A549 (cell line): ENCODE measurements at regions of chr15 and their contacts with region 1.

Region 1: DNA sequence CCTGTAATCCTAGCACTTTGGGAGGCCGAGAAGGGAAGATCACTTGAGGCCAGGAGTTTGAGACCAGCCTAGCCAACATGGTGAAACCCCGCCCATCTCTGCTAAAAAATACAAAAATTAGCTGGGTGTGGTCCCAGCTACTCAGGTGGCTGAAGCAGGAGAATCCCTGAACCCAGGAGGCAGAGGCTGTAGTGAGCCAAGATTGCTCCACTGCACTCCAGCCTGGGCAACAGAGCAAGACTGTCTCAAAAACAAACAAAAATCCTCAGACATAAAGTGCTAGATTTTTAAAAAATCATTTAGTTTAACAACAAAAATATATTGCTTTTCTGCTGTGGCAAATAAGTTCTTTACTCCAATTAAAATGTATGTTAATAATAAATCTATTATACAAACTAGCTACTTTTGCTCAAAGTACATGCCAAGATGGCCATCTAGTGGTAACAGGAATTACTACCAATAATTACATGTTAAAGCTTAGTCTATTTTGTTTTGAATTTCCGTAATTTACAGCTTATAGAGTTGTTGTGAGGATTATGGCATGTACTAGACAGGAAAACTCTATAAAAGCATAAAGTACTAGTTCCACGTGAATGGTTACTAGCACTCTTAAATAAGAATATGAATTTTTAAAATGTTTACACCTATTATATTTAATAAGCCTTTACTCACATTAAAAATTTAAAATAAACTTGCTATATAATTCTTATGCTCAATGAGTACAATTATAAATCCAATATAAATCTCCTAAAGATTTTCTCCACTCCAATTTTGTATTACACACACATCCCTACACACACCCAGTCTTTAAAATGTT is 39.0 kb downstream of the GABPB1 start:
- DNase-seq: peak; percentile 25 to 65
- ATAC-seq: peak; percentile 30 to 77; a peak in 3 of 6 replicates
- H3K4me3 ChIP-seq: no peak overlapping the region
- H3K27ac ChIP-seq: peak overlapping the region; percentile 11 to 56; a peak in 4 of 6 replicates
- H3K4me1 ChIP-seq: peaks cover 25% of the 10 kb centered on the region
- CTCF ChIP-seq: peak; percentile 94
- EP300 ChIP-seq: no peak
- POLR2A ChIP-seq: no peak
- RAD21 ChIP-seq: peak; percentile 92 to 96

Region 2: GRCh38 chr15:50166216-50166615 is 149.8 kb before region 1 on chr15:
- CTCF ChIA-PET with region 1: interaction called, 18 read pairs
- POLR2A ChIA-PET with region 1: interaction called, 3 read pairs
- DNase-seq: peak; percentile 38 to 71
- ATAC-seq: peak; percentile 77 to 89
- H3K4me3 ChIP-seq: no peak overlapping the region; the same call in 2 of the 3 replicates
- H3K27ac ChIP-seq: peak overlapping the region; percentile 88 to 92
- H3K4me1 ChIP-seq: peaks cover 63% of the 10 kb centered on the region
- CTCF ChIP-seq: no peak
- EP300 ChIP-seq: peak; percentile 22 to 28; a peak in 2 of 5 replicates
- POLR2A ChIP-seq: no peak
- RAD21 ChIP-seq: no peak; a peak in 1 of 5 replicates

Region 3: GRCh38 chr15:50182219-50183013 is 133.6 kb before region 1 on chr15:
- CTCF ChIA-PET with region 1: interaction called, 34 read pairs
- POLR2A ChIA-PET with region 1: no interaction called
- DNase-seq: peak; percentile 55 to 61
- ATAC-seq: peak; percentile 84 to 88
- H3K4me3 ChIP-seq: peak overlapping the region; percentile 73
- H3K27ac ChIP-seq: peak overlapping the region; percentile 76 to 88
- H3K4me1 ChIP-seq: peaks cover 27% of the 10 kb centered on the region; the same call in 2 of the 3 replicates
- CTCF ChIP-seq: peak; percentile 8; the same call in 1 of the 3 replicates
- EP300 ChIP-seq: no peak
- POLR2A ChIP-seq: peak; percentile 11; the same call in 1 of the 2 replicates
- RAD21 ChIP-seq: peak in 1 of 2 experiments; percentile 2; a peak in 3 of 5 replicates

Region 4: GRCh38 chr15:50302581-50302980 is 13.4 kb before region 1 on chr15:
- CTCF ChIA-PET with region 1: interaction called, 10 read pairs
- POLR2A ChIA-PET with region 1: no interaction called
- DNase-seq: no peak
- ATAC-seq: no peak
- H3K4me3 ChIP-seq: no peak overlapping the region
- H3K27ac ChIP-seq: no peak overlapping the region
- H3K4me1 ChIP-seq: no peaks in the 10 kb centered on the region
- CTCF ChIP-seq: no peak
- EP300 ChIP-seq: no peak
- POLR2A ChIP-seq: no peak
- RAD21 ChIP-seq: no peak

Region 5: GRCh38 chr15:50330921-50331320 is 14.9 kb after region 1 on chr15:
- CTCF ChIA-PET with region 1: interaction called, 26 read pairs
- POLR2A ChIA-PET with region 1: no interaction called
- DNase-seq: peak in 1 of 2 experiments; percentile 13
- ATAC-seq: peak; percentile 39 to 49; a peak in 4 of 6 replicates
- H3K4me3 ChIP-seq: no peak overlapping the region
- H3K27ac ChIP-seq: no peak overlapping the region
- H3K4me1 ChIP-seq: no peaks in the 10 kb centered on the region
- CTCF ChIP-seq: no peak
- EP300 ChIP-seq: no peak
- POLR2A ChIP-seq: no peak
- RAD21 ChIP-seq: no peak

Region 6: DNA sequence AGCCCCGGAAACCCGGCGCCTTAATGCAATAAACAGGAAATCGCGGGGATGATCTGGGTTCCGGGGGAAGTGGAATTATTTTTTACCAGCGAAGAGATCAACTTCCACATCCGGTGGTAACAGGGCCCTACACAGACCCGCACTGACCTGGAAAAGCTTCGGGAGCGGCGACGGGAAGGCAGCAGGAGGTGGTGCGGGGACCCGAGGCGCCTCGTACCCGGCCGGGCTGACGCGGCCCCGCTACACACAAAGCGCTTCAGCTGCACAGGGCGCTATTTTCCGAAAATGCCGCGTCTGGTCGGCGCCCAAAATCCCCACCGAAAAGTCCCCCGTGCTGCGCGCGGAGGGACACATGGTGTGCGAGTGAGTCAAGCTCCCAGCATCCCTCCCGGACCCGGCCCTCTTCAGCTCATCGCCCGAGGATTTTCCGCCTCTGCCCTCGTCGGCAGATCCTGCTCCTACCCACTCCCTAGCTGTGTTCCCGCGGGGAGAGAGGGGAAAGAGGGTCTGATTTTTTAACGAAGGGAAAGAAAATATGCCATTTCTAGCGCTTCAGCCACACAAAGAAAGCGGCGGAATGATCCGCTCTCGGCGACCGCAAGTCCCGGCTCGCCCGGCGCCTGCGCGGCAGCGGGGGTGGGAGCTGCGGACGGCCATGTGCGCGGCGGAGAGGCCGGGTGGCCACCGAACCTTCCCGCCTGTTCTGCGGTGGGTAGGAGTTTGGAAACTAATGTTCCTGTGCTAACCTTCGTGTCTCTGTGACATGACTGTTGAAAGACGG is 39.0 kb after region 1 on chr15 and contains the start of gene GABPB1:
- CTCF ChIA-PET with region 1: interaction called, 10 read pairs
- POLR2A ChIA-PET with region 1: no interaction called
- DNase-seq: peak; percentile 83 to 98
- ATAC-seq: peak; percentile 75 to 86
- H3K4me3 ChIP-seq: peak within 1 kb of the TSS; percentile 91
- H3K27ac ChIP-seq: peak within 1 kb of the TSS; percentile 96 to 98
- H3K4me1 ChIP-seq: peaks cover 27% of the 10 kb centered on the region
- CTCF ChIP-seq: no peak
- EP300 ChIP-seq: no peak
- POLR2A ChIP-seq: peak; percentile 97
- RAD21 ChIP-seq: no peak
- polyA plus RNA-seq, gene GABPB1: 53.9 and 55.1 TPM in 2 replicates

Region 7: GRCh38 chr15:50523851-50524251 is 207.8 kb after region 1 on chr15:
- CTCF ChIA-PET with region 1: no interaction called
- POLR2A ChIA-PET with region 1: no interaction called
- DNase-seq: no peak
- ATAC-seq: no peak
- H3K4me3 ChIP-seq: no peak overlapping the region
- H3K27ac ChIP-seq: no peak overlapping the region
- H3K4me1 ChIP-seq: no peaks in the 10 kb centered on the region
- CTCF ChIP-seq: no peak
- EP300 ChIP-seq: no peak
- POLR2A ChIP-seq: no peak
- RAD21 ChIP-seq: no peak